Activated B cell treated with CpG ODN at 0.5 μM for 24 hours (primary cell): ENCODE measurements at regions of chr16 and their contacts with region 1.

Region 1: GRCh38 chr16:85675251-85675927 is 13.4 kb downstream of the GINS2 start:
- DNase-seq: no peak
- ATAC-seq: no peak
- H3K4me3 Mint-ChIP-seq: no peak overlapping the region
- H3K27ac Mint-ChIP-seq: peak overlapping the region; percentile 26
- H3K4me1 Mint-ChIP-seq: peaks cover 9% of the 10 kb centered on the region
- H3K27me3 Mint-ChIP-seq: no peaks in the 10 kb centered on the region
- CTCF ChIP-seq: no peak

Region 2: GRCh38 chr16:85393674-85394483 is 281.5 kb before region 1 on chr16:
- CTCF ChIA-PET with region 1: no interaction called
- POLR2A ChIA-PET with region 1: no interaction called
- intact Hi-C with region 1: no loop called
- DNase-seq: peak; percentile 65
- ATAC-seq: peak; percentile 83
- H3K4me3 Mint-ChIP-seq: no peak overlapping the region
- H3K27ac Mint-ChIP-seq: no peak overlapping the region
- H3K4me1 Mint-ChIP-seq: no peaks in the 10 kb centered on the region
- H3K27me3 Mint-ChIP-seq: peaks cover 16% of the 10 kb centered on the region
- CTCF ChIP-seq: no peak

Region 3: DNA sequence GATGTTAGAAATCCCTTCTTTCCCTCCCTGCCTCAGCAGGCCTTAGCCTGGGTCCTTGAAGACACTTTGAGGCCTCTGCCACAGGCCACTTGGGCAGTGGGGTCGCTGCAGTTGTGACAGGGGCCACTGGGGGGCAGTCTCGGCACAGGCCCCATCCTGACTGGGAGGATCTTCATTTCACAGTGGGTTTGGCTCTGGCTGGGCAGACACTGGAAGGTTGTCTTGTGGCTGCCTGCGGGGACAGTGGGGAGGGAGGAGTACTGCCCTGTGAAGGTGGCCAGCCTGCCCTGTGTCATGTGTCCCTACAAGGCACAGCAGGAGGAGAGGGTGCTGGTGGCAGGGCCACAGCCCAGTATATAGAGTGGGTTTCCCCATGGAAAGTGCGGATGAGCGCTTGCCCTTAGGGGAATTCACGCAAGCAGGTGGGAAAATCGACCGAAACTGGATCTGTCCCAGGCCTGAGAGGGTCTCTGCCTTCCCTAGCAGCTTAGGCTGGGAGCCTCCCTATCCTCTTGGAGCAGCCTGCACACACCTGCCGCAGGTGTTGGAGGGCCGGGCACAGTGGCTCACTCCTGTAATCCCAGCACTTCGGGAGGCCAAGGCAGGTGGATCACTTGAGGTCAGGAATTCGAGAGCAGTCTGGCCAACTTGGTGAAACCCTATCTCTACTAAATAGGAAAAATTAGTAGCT is 15.4 kb before region 1 on chr16:
- CTCF ChIA-PET with region 1: interaction called, 10 read pairs
- POLR2A ChIA-PET with region 1: no interaction called
- intact Hi-C with region 1: no loop called
- DNase-seq: peak; percentile 70
- ATAC-seq: peak; percentile 97
- H3K4me3 Mint-ChIP-seq: no peak overlapping the region
- H3K27ac Mint-ChIP-seq: peak overlapping the region; percentile 67
- H3K4me1 Mint-ChIP-seq: no peaks in the 10 kb centered on the region
- H3K27me3 Mint-ChIP-seq: no peaks in the 10 kb centered on the region
- CTCF ChIP-seq: no peak

Region 4: GRCh38 chr16:85728879-85729278 is 53.5 kb after region 1 on chr16:
- CTCF ChIA-PET with region 1: no interaction called
- POLR2A ChIA-PET with region 1: no interaction called
- intact Hi-C with region 1: no loop called
- DNase-seq: no peak
- ATAC-seq: no peak
- H3K4me3 Mint-ChIP-seq: no peak overlapping the region
- H3K27ac Mint-ChIP-seq: no peak overlapping the region
- H3K4me1 Mint-ChIP-seq: peaks cover 4% of the 10 kb centered on the region
- H3K27me3 Mint-ChIP-seq: no peaks in the 10 kb centered on the region
- CTCF ChIP-seq: no peak